ENCODE measurements at regions of chrX and their contacts with region 1.

Region 1: DNA sequence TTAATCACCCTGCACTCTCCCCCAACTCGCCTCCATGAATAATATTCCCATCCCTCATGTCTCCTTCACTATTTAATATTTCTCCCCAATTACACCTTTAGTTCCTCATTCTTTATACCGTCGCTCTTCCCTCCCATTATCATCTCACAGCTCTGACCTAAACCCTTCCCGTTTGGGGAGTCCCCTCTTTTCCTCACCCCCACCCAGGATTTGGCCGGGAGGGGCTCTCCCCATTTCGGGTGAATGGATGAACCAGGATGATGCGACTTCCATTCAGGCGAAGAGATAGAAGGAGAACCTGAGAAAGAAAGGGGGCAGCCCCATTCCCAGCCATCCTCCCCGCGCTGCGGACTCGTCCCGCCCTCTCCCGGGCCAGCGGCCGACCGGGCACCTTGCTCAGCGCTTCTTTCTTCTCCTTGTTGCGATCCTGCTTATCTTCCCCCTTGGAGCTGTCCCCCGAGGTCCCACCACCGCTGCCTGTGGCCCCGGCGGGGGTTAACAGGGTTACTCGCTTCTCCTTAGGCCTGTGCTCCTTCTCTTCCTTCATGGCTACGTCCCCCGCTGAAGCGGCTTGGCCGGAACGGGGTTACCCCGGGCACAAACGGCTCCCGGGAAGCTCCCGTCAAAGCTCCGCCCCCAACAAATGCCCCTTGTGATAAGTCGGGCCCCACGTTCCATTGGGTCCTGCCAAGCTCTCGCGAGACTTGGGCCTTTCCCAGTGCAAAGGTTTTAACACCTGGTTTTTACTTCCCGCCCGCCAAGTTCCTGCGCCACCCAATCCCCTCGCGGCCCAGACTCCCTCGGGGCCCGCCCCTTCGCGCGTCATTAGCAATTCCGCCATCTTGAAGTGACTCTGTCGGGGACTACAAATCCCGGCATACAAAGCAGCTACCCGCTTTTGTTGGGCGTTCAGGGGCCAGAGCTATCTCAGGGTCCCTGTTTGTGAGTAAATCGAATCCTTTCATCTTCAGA is at the start of gene UPF3B:
- DNase-seq: peak; percentile 84 to 96 (median 94)
- H3K4me3 ChIP-seq: peak within 1 kb of the TSS; percentile 53 to 85 (median 70)
- H3K27ac ChIP-seq: peak within 1 kb of the TSS in 58 of 59 donors; percentile 41 to 93 (median 84)
- H3K27me3 ChIP-seq: peaks cover 0 to 27% (median 0%) of the 10 kb centered on the region in 45 donors
- CTCF ChIP-seq: peak in 5 of 56 donors; percentile 8 to 41 (median 12)
- total RNA-seq, gene UPF3B: 9.1 to 20.2 (median 12.9) TPM

Region 2: DNA sequence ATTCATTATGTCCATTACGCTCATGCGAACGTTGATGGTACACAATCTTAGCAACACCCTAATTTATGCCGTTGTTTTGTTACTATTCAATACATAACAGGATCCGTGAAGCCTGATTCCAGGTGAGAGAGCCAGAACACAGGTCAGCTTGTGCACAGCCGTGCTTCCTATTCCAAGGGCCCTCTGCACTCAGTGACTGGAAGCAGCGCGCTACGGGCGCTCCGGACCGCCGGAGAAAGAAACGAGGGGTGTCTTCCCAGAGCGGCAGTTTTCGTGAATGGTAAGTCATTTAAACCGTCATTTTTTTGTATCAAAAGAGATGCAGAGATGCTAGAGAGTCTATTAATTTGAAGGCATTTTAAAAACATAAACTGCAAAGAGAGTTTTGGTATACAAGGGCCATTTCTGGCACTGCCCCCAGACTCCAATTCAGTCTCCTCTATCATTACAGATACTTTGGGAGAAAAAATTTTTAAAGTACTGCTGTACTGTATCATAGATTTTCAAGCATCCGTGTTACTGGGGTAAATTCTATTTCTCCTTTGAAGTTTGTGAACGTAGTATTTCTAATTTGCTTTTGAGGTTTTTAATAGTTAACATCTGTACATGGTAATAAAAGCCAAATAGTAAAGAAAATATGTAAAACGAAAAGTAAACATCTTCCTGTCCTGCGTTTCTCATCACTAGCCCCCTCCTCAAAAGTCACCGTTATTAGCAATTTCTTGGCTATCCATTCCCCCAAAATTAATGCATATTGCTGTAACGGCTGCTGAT is 377.9 kb before region 1 on chrX:
- intact Hi-C with region 1: loop called in 1 of 2 experiments (anchors 5 kb)
- DNase-seq: no peak
- H3K4me3 ChIP-seq: no peak overlapping the region
- H3K27ac ChIP-seq: no peak overlapping the region
- H3K27me3 ChIP-seq: peaks cover 0 to 35% (median 3%) of the 10 kb centered on the region in 45 donors
- CTCF ChIP-seq: no peak

Region 3: GRCh38 chrX:119606280-119607015 is 246.2 kb before region 1 on chrX and contains the start of gene NKRF:
- intact Hi-C with region 1: loop called in 1 of 2 experiments (anchors 5 kb)
- DNase-seq: peak; percentile 76 to 90 (median 86)
- H3K4me3 ChIP-seq: peak within 1 kb of the TSS; percentile 45 to 83 (median 71)
- H3K27ac ChIP-seq: peak within 1 kb of the TSS; percentile 50 to 98 (median 92)
- H3K27me3 ChIP-seq: peaks cover 0 to 38% (median 0%) of the 10 kb centered on the region in 45 donors
- CTCF ChIP-seq: peak in 6 of 56 donors; percentile 6 to 26 (median 14)
- total RNA-seq, gene NKRF: 11.2 to 39.9 (median 29.2) TPM

Region 4: DNA sequence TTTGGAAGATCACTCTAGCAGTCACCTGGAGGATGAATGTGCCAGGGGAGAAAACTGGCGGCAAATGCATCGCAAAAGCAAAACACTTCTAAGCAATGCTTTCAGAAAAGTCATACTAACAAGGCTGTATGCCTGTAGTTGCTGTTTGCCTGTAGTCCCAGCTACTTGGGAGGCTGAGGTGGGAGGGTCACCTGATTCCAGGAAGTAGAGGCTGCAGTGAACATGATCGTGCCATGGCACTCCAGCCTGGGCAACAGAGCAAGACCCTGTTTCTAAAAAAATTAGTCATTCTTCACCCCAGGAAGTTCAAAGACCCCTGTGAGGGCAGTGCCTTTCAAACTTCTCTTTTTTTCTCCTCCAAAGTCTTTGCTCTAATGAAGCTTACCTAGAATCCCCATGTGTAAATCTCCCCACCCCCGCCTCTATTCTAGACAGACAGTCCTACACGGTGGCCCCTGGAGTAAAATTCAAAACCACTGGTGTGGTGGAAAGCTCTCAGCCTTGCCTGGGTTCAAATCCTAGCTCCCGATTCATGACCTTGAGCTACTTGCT is 88.8 kb before region 1 on chrX:
- intact Hi-C with region 1: no loop called
- DNase-seq: no peak
- H3K4me3 ChIP-seq: no peak overlapping the region
- H3K27ac ChIP-seq: no peak overlapping the region
- H3K27me3 ChIP-seq: peaks cover 0 to 46% (median 12%) of the 10 kb centered on the region in 45 donors
- CTCF ChIP-seq: no peak

Region 5: DNA sequence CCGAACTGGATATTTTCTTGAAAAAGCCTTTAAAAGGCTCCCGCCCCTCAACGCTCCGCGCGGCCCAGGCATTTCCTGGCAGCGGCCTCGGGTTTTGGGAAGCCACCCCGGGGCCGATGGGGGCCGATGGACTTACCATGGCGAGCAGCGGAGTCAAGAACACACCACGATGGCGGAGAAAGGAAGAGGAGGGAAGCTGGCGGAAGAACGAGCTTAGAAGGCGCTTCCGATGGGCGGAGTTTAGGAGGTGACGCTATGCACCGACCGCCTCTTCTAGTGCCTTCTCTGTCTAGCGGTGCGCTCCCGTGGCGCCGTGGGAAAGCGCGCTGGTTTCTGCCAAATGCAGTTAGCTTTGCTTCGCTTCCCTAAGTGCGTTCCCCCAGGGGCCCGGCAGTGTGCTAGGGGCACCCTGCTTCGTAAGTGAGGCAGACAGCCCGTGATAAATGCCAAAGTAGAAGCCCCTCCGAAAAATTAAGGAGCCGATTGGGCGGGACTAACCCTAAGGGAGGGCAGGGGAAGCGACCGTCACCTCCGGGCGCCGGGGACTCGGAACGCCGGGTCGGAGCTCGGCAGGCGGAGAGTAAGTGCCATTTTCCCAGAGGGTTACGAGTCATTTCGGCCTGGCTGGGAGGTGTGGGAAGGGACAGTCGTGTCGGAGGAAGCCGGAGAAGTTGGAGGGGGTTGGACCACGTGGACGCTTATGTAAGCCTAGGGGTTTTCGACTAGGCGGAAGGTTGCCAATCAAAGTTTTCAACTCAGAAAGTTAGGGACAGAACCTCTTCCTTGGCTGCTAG is 61.0 kb before region 1 on chrX and contains the start of gene RPL39:
- intact Hi-C with region 1: loop called (anchors 5 kb)
- DNase-seq: peak; percentile 52 to 88 (median 81)
- H3K4me3 ChIP-seq: peak within 1 kb of the TSS; percentile 42 to 83 (median 68)
- H3K27ac ChIP-seq: peak within 1 kb of the TSS; percentile 72 to 99 (median 93)
- H3K27me3 ChIP-seq: peaks cover 0 to 23% (median 0%) of the 10 kb centered on the region in 45 donors
- CTCF ChIP-seq: peak in 6 of 56 donors; percentile 4 to 19 (median 12)
- total RNA-seq, gene RPL39: 155 to 472 (median 323) TPM

Region 6: DNA sequence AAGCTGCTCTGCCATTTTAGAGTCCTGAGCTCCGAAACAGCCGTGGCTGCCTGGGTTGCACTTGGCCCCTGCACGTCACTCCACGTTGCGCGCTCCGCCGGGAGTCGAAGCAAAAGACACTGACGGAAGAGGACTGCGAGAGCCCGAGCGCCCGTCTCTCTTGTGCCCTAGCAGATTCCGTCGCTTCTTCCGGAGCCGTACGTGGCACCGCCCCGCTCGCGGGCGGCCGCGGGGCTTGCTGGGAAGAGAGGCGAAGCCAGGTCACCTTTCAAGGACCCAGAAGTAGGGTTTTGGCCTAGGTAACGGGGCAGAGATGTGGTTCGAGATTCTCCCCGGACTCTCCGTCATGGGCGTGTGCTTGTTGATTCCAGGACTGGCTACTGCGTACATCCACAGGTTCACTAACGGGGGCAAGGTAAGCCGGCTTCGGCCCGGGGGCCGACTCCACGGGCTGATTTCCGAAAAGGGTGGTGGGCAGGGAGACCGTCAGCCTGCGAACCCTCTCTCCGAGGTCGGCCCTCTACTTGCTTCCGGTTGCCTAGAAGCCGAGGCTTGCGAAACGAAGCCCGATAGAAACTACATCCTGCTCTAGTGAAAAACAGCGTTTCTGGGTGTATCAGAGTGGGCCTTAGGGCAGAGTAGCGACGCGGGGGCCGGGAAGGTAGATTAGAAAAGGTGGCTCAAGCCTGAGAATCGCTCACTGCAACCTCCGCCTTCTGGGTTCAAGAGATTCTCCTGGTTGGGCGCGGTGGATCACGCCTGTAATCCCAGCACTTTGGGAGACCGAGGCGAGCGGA is 19.1 kb after region 1 on chrX and contains the starts of genes NDUFA1 and RNF113A:
- intact Hi-C with region 1: loop called (anchors 1 kb)
- DNase-seq: peak; percentile 62 to 85 (median 79)
- H3K4me3 ChIP-seq: peak within 1 kb of the TSS; percentile 38 to 82 (median 69)
- H3K27ac ChIP-seq: peak within 1 kb of the TSS; percentile 6 to 94 (median 87)
- H3K27me3 ChIP-seq: peaks cover 0 to 30% (median 0%) of the 10 kb centered on the region in 45 donors
- CTCF ChIP-seq: peak in 7 of 56 donors; percentile 5 to 30 (median 15)
- total RNA-seq, gene NDUFA1: 55.9 to 137 (median 104) TPM
- total RNA-seq, gene RNF113A: 6.9 to 18.1 (median 12.5) TPM

Region 7: DNA sequence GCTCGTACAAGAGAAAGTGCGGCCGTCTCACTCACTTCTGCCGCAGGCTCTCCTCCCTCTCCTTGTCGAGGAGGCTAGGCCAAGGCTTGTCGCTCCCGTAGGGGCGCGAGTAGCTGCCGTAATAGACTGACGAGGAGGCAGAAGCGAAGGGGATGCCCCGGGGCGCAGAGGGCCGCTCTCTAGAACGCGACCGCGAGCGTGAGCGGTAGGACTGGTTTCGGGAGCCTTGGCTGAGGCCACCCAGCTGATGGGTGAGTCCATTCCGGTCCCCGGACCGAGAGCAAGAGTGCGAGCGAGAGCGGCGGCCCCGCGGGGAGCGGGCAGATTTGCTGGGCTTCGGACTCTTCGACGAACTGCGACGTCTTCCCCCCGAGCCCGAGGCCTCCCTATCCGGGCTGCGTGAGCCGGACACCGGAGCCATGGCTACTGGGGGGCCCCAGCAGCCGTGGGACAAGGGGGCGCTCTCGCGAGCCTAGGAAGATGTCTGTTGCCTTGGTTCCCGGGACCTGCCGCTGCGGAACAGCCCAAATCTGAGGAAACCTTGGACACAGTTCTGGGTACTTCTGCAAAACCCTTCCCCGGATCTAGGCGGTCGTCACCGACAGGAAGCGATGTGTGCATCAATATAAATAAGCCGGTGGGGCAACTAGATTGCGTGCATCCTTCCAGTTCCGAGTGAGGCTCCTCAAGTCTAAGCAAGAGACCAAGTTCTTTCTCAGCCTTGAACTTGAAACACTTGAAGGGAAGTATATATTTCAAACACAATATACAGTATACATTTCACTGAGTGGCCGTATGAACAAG is 90.7 kb after region 1 on chrX and contains the start of gene NKAP:
- intact Hi-C with region 1: loop called in 1 of 2 experiments (anchors 5 kb)
- DNase-seq: peak; percentile 44 to 81 (median 75)
- H3K4me3 ChIP-seq: peak within 1 kb of the TSS; percentile 46 to 85 (median 73)
- H3K27ac ChIP-seq: peak within 1 kb of the TSS; percentile 14 to 90 (median 80)
- H3K27me3 ChIP-seq: peaks cover 0 to 22% (median 0%) of the 10 kb centered on the region in 45 donors
- CTCF ChIP-seq: peak in 44 of 56 donors; percentile 1 to 58 (median 34)
- total RNA-seq, gene NKAP: 9.2 to 18.1 (median 12.3) TPM